BJ (cell line): ENCODE measurements at regions of chr10 and their contacts with region 1.

Region 1: GRCh38 chr10:102894466-102895213 is 23.5 kb upstream of the CNNM2 start:
- DNase-seq: no peak
- H3K4me3 ChIP-seq: no peak overlapping the region
- H3K27me3 ChIP-seq: no peaks in the 10 kb centered on the region
- CTCF ChIP-seq: no peak

Region 2: GRCh38 chr10:102565793-102566192 is 328.8 kb before region 1 on chr10:
- CTCF ChIA-PET with region 1: no interaction called
- POLR2A ChIA-PET with region 1: no interaction called
- DNase-seq: no peak
- H3K4me3 ChIP-seq: no peak overlapping the region
- H3K27me3 ChIP-seq: no peaks in the 10 kb centered on the region
- CTCF ChIP-seq: no peak

Region 3: GRCh38 chr10:102872163-102872562 is 22.5 kb before region 1 on chr10:
- CTCF ChIA-PET with region 1: interaction called, 3 read pairs
- POLR2A ChIA-PET with region 1: interaction called, 11 read pairs
- DNase-seq: no peak
- H3K4me3 ChIP-seq: no peak overlapping the region
- H3K27me3 ChIP-seq: no peaks in the 10 kb centered on the region
- CTCF ChIP-seq: no peak